Breast epithelium (tissue), 4 donors: ENCODE measurements at regions of chr11 and their contacts with region 1.

Region 1: GRCh38 chr11:597166-597725 is 18.5 kb downstream of the IRF7 start:
- DNase-seq: no peak
- H3K4me3 ChIP-seq: no peak overlapping the region
- H3K27ac ChIP-seq: no peak overlapping the region
- H3K4me1 ChIP-seq: no peaks in the 10 kb centered on the region
- H3K27me3 ChIP-seq: no peaks in the 10 kb centered on the region
- CTCF ChIP-seq: no peak
- POLR2A ChIP-seq: no peak

Region 2: DNA sequence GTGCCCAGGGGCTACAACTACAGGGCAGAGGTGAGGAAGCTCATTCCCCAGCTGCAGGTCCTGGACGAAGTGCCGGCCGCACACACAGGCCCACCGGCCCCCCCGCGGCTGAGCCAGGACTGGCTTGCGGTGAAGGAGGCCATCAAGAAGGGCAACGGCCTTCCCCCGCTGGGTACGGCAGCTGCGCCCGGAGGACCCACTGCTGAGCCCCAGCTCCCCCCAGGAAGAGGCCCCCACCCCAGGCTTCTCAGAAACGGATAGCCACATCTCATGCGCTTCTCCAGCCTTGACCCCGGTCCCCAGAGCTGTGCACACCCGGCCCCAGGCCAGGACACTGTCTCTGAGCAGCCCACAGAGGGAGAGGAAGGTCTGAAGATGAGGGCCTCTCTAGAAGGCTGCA is 46.1 kb before region 1 on chr11:
- intact Hi-C with region 1: loop called (anchors 1 kb)
- DNase-seq: no peak
- H3K4me3 ChIP-seq: no peak overlapping the region
- H3K27ac ChIP-seq: no peak overlapping the region
- H3K4me1 ChIP-seq: peaks cover 0 to 5% of the 10 kb centered on the region in 2 donors
- H3K27me3 ChIP-seq: peaks cover 3 to 6% of the 10 kb centered on the region in 2 donors
- CTCF ChIP-seq: no peak
- POLR2A ChIP-seq: no peak

Region 3: GRCh38 chr11:579830-580601 is 17.2 kb before region 1 on chr11:
- intact Hi-C with region 1: no loop called
- DNase-seq: no peak
- H3K4me3 ChIP-seq: no peak overlapping the region
- H3K27ac ChIP-seq: no peak overlapping the region
- H3K4me1 ChIP-seq: peaks cover 11 to 30% of the 10 kb centered on the region in 2 donors
- H3K27me3 ChIP-seq: no peaks in the 10 kb centered on the region
- CTCF ChIP-seq: no peak
- POLR2A ChIP-seq: no peak

Region 4: DNA sequence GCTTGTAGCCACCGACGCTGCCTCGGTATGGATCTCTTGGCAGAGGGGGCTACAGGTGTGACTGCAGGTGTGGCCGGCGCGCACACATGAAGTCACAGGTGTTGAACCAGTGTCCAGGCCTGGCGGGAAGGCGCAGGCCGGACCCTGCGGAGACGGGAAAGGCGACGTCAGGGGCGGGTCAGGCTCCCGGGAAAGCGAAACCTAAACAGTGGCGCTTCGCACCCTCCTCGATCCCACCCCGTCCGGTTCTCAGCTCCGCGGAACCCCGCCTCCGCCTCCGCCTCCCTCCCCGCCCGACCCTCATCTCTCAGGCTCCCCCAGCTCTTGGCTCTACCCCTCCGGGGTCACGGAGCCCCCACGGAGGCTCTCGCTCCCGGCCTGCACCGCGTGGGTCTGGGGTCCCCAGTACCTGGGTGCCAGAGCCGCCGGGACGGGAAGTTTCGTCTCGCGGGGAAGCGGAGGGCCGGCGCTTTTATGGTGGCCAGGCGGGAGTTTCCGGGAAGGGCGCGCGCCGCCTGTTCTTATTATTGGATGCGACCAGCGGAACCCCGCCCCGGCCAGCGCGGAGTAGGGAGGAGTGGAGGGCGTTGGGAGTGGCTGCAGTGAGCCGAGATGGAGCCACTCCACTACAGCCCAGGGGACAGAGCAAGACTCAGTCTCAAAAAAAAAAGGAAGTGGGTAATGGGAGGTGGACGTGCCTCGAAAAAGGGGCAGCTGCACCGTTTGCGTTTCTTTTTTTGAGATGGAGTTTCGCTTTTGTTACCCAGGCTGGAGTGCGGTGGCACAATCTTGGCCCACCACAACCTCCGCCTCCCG is 18.5 kb after region 1 on chr11 and contains the start of gene IRF7:
- intact Hi-C with region 1: loop called (anchors 1 kb)
- DNase-seq: peak; percentile 94 to 97
- H3K4me3 ChIP-seq: peak within 1 kb of the TSS; percentile 71 to 76 (median 73)
- H3K27ac ChIP-seq: peak within 1 kb of the TSS; percentile 92 to 99
- H3K4me1 ChIP-seq: peaks cover 10 to 13% of the 10 kb centered on the region in 2 donors
- H3K27me3 ChIP-seq: no peaks in the 10 kb centered on the region
- CTCF ChIP-seq: no peak
- POLR2A ChIP-seq: peak; percentile 68
- total RNA-seq, gene IRF7: 13.3 to 29.9 (median 27.9) TPM